Activated CD8-positive, alpha-beta T cell treated with anti-CD3 and anti-CD28 coated beads, Interleukin-2, amount 10 ng/mL, durations not matched to agents 7 days and 5 days (primary cell): ENCODE measurements at regions of chr12 and their contacts with region 1.

Region 1: DNA sequence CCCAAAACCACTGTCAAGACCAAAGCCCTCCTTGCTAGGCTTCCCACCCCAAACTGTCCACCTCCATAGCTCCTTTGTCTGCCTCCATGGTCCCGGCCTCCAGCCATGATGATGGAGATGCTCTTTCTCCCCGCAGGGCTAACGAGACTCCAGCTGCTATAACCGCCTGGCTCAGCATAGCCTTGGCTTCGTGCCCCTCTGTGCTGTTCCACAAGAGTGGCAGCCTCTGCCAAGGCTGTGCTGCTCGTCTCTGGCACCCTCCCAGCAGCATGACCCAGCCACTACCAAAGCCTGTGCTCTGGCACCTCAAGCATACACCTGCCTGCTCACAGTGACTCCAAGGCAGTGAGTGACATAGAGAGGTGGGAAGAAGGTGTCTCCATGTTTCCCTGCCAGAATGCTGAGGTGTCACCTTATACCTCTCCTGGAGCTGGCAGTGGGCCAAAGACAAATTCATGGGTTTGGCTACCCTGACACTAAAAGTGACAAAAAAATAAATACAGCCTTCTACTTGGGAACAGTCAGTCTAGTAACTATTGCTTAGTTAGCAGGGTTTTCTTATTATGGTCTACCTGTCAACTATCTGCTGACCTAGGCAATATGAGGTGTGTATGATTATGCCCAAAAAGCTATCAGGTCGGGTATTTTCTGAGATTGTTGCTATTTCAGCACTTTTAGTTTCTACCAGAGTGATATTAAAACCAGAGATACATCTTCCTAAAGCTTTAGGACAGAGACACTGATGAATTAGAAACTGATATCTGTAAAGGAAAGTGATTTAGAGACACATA is 16.1 kb upstream of the KRT73 start:
- DNase-seq: peak; percentile 17
- ATAC-seq: no peak
- H3K4me3 Mint-ChIP-seq: no peak overlapping the region
- H3K27ac Mint-ChIP-seq: peak overlapping the region; percentile 17
- H3K4me1 Mint-ChIP-seq: peaks cover 67% of the 10 kb centered on the region
- H3K27me3 Mint-ChIP-seq: peaks cover 5% of the 10 kb centered on the region

Region 2: DNA sequence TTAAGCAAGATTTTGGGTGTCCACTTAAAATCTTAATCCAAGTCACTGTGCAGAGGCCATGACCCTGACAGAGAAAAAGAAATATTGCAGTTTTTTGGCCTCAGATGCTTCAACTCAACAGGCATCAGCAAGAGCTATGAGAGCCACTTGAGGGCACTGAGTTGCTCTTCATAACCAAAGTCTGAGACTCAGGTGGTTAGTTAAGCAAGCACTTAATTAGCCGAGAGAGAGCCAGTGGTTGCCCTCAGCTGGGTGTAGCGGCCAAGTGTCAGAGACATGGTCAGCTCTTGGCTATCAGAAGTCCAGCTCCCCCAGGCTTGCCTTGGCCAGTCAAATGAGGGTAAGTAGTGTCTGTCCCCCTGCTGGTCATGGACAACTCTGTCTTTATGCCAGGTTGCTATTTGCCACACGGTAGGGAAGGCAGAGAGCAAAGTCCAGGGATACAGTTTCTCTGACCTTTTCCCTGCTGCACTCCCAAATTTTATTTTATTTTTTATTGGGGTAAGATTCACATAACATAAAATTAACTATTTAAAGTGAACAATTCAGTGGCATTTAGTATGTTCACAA is 72.5 kb before region 1 on chr12:
- CTCF ChIA-PET with region 1: no interaction called
- POLR2A ChIA-PET with region 1: no interaction called
- DNase-seq: no peak
- ATAC-seq: no peak
- H3K4me3 Mint-ChIP-seq: no peak overlapping the region
- H3K27ac Mint-ChIP-seq: no peak overlapping the region
- H3K4me1 Mint-ChIP-seq: no peaks in the 10 kb centered on the region
- H3K27me3 Mint-ChIP-seq: peaks cover 27% of the 10 kb centered on the region

Region 3: DNA sequence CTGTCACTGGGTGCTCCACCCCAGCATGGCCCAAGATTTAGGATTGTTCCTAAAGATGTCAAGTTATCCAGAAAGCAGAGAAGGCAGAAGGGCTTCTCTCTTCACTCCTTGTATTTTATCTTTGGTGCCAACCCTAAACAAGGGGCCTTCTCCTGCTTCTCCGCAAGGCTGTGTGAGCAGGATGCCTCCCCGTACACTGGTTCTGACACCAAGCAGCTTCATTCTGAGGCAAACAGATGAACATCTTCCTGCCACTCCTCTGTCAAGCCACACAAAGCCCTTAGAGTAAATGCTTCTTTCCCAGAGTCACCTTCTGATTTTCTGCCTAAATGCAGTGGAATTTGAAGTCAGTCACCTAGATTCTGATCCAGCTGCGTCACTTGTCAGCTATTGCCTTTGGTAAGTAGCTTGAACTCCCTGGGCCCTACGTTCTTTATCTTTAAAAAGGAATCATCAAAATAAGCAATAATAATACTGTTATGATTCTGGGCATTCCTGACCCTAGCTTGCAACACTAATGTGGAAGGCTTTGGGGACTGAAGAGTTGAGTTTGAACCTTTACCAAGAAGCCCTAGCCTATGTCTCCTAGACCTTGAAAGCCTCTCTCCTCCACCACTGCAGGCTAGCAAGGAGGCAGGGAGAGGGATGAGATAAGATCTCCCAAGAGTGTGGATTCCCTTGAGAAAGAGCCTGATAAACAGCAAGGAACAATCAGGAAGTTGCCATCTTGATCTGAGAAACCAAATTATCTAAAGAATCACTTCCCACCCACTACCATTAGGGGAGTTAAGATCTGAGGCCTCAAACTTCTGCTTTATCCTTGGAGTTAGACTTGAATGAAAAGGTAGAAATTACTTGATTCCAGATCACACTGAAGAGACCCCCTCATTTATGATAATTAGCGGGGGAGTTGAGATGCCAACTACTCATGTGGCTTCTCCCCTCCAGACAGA is 21.8 kb before region 1 on chr12:
- CTCF ChIA-PET with region 1: interaction called, 10 read pairs
- POLR2A ChIA-PET with region 1: interaction called, 4 read pairs
- DNase-seq: no peak
- ATAC-seq: no peak
- H3K4me3 Mint-ChIP-seq: no peak overlapping the region
- H3K27ac Mint-ChIP-seq: peak overlapping the region; percentile 58
- H3K4me1 Mint-ChIP-seq: peaks cover 75% of the 10 kb centered on the region
- H3K27me3 Mint-ChIP-seq: peaks cover 6% of the 10 kb centered on the region

Region 4: GRCh38 chr12:52645120-52645761 is 10.8 kb after region 1 on chr12:
- CTCF ChIA-PET with region 1: interaction called, 16 read pairs
- POLR2A ChIA-PET with region 1: interaction called, 10 read pairs
- DNase-seq: peak; percentile 87
- ATAC-seq: peak; percentile 91
- H3K4me3 Mint-ChIP-seq: peak overlapping the region; percentile 50
- H3K27ac Mint-ChIP-seq: peak overlapping the region; percentile 99
- H3K4me1 Mint-ChIP-seq: peaks cover 73% of the 10 kb centered on the region
- H3K27me3 Mint-ChIP-seq: peaks cover 3% of the 10 kb centered on the region

Region 5: GRCh38 chr12:52735816-52736632 is 101.6 kb after region 1 on chr12:
- CTCF ChIA-PET with region 1: no interaction called
- POLR2A ChIA-PET with region 1: no interaction called
- DNase-seq: no peak
- ATAC-seq: no peak
- H3K4me3 Mint-ChIP-seq: no peak overlapping the region
- H3K27ac Mint-ChIP-seq: no peak overlapping the region
- H3K4me1 Mint-ChIP-seq: no peaks in the 10 kb centered on the region
- H3K27me3 Mint-ChIP-seq: peaks cover 6% of the 10 kb centered on the region